ENCODE measurements at regions of chr3 and their contacts with region 1.

Region 1: DNA sequence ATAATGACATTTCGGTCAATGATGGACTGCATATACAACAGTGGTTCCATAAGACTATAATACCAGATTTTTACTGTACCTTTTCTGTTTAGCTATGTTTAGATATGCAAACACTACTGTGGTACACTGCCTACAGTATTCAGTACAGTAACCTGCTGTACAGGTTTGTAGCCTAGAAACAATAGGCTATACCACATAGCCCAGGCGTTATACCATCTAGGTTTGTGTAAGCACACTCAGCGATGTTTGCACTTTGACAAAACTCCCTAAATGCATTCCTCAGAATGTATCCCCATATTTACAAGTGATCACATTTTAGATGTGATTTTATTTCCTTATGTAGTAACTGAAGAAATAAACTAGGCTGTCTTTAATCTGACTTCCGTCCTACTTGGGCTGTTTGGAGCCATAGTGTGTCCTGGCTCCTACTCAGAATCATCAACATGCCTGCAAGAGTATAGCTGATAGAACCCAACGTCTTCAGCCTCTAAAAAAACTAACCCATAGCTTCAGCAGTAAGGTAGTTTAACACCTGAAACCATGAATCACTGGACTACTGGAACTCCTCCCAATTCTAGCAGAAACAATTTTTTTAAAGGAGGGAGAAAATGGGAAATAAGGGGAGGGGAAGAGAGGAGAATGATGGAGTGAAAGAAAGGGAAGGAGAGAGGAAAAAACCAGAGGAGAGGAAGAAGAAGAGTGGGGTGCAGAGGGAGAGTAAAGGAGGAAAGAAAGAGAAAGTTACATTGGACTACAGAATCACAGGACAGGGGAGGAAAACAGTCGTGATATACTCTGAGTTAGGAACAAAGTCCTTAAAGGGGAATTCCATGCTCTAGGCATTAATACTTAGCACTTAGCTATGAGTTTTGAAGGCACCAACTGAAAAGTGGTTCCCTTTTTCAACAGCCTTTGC is 67.7 kb upstream of the PLXND1 start:
- DNase-seq: no peak
- ATAC-seq: peak; percentile 63
- H3K4me3 ChIP-seq: no peak overlapping the region
- H3K27ac ChIP-seq: no peak overlapping the region
- H3K4me1 ChIP-seq: peaks cover 4% of the 10 kb centered on the region; the same call in 1 of the 2 replicates
- H3K27me3 ChIP-seq: no peaks in the 10 kb centered on the region
- CTCF ChIP-seq: no peak
- EP300 ChIP-seq: no peak
- POLR2A ChIP-seq: no peak
- RAD21 ChIP-seq: no peak

Region 2: DNA sequence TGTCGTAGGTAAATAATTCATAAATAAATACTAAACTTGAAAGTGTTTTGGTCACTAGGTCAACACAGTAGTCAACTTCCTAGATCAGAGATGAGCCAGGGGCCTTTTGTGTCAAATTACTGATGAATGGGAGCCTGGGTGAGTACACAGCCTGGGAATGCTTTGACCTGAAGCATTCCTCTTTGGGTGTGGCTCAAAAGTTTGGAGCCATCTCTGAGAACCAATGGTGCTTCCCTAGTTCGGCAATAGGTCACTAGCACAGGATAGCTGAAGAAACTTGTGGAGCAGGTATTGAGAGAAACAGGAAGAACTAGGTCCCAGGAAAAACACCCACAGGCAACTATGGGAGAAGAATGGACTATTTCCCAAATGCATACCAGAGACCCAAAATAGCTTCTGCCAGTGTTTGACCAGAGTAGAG is 11.1 kb before region 1 on chr3:
- CTCF ChIA-PET with region 1: interaction called, 8 read pairs
- POLR2A ChIA-PET with region 1: interaction called, 11 read pairs
- RAD21 ChIA-PET with region 1: interaction called, 5 read pairs
- SMC1A ChIA-PET with region 1: interaction called, 5 read pairs
- in situ Hi-C with region 1: no loop called
- intact Hi-C with region 1: no loop called
- DNase-seq: no peak
- ATAC-seq: no peak
- H3K4me3 ChIP-seq: no peak overlapping the region
- H3K27ac ChIP-seq: no peak overlapping the region
- H3K4me1 ChIP-seq: peaks cover 3% of the 10 kb centered on the region; the same call in 1 of the 2 replicates
- H3K27me3 ChIP-seq: no peaks in the 10 kb centered on the region
- CTCF ChIP-seq: no peak
- EP300 ChIP-seq: no peak
- POLR2A ChIP-seq: no peak
- RAD21 ChIP-seq: no peak

Region 3: DNA sequence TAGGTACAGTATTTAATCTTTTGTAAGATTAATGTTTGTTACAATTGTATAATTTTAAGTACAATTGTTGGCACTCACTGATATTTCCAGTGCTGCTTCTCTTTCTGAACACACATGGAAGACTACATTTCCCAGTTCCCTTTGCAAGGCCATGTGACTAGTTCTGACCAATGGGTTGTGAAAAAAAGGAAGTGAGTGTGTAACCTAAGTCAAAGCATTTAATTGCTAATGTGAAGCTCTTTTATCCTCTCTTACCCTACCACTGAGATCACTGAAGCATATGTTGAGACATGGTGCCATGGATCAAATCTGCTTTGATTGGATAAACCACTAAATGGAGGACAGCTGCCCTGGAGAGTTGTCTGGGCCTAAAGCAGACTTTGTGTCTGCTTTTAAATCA is 16.3 kb after region 1 on chr3:
- CTCF ChIA-PET with region 1: interaction called, 18 read pairs
- POLR2A ChIA-PET with region 1: no interaction called
- RAD21 ChIA-PET with region 1: no interaction called
- SMC1A ChIA-PET with region 1: interaction called, 5 read pairs
- in situ Hi-C with region 1: no loop called
- intact Hi-C with region 1: no loop called
- DNase-seq: peak; percentile 48
- ATAC-seq: peak; percentile 99
- H3K4me3 ChIP-seq: no peak overlapping the region
- H3K27ac ChIP-seq: no peak overlapping the region
- H3K4me1 ChIP-seq: no peaks in the 10 kb centered on the region
- H3K27me3 ChIP-seq: no peaks in the 10 kb centered on the region
- CTCF ChIP-seq: no peak
- EP300 ChIP-seq: no peak
- POLR2A ChIP-seq: no peak
- RAD21 ChIP-seq: no peak

Measured in GM12878 (cell line).